Activated B cell treated with CpG ODN at 0.5 μM for 24 hours (primary cell): ENCODE measurements at regions of chr12 and their contacts with region 1.

Region 1: GRCh38 chr12:89846473-89847055 is 137.9 kb upstream of the ATP2B1 start:
- DNase-seq: no peak
- ATAC-seq: no peak
- H3K4me3 Mint-ChIP-seq: no peak overlapping the region
- H3K27ac Mint-ChIP-seq: no peak overlapping the region
- H3K4me1 Mint-ChIP-seq: peaks cover 1% of the 10 kb centered on the region
- H3K27me3 Mint-ChIP-seq: no peaks in the 10 kb centered on the region
- CTCF ChIP-seq: no peak

Region 2: GRCh38 chr12:89831310-89832095 is 15.1 kb before region 1 on chr12:
- CTCF ChIA-PET with region 1: no interaction called
- POLR2A ChIA-PET with region 1: no interaction called
- intact Hi-C with region 1: loop called (anchors 1 kb)
- DNase-seq: no peak
- ATAC-seq: no peak
- H3K4me3 Mint-ChIP-seq: no peak overlapping the region
- H3K27ac Mint-ChIP-seq: no peak overlapping the region
- H3K4me1 Mint-ChIP-seq: peaks cover 5% of the 10 kb centered on the region
- H3K27me3 Mint-ChIP-seq: no peaks in the 10 kb centered on the region
- CTCF ChIP-seq: no peak